ENCODE measurements at regions of chr18 and their contacts with region 1.

Region 1: GRCh38 chr18:43013486-43013885 is 102.0 kb downstream of the RIT2 start:
- DNase-seq: no peak
- ATAC-seq: no peak
- H3K4me3 ChIP-seq: no peak overlapping the region
- H3K4me3 Mint-ChIP-seq: no peak overlapping the region
- H3K27ac ChIP-seq: no peak overlapping the region
- H3K27ac Mint-ChIP-seq: no peak overlapping the region
- H3K4me1 ChIP-seq: no peaks in the 10 kb centered on the region
- H3K4me1 Mint-ChIP-seq: no peaks in the 10 kb centered on the region
- H3K27me3 ChIP-seq: no peaks in the 10 kb centered on the region
- H3K27me3 Mint-ChIP-seq: no peaks in the 10 kb centered on the region

Region 2: DNA sequence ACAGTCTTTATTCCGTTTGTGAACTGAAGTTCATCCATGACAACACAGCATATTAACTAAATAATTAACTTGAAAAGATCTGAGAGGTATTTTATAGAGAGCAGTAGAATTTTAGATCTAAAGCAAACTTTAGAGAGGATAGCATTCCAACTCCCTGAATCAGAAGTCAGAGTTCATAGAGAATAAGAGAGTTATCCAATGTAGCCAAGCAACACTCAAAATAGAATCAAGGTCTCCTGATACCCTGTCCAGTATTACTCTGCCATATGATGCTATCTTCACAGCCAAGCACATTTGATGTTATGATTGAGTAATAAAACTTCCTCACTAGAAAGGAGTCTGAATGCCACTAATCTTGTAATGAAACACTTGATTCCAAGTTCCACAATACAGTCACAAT is 46.5 kb after region 1 on chr18:
- CTCF ChIA-PET with region 1: no interaction called
- POLR2A ChIA-PET with region 1: interaction called in 1 of 2 experiments, 10 read pairs
- DNase-seq: no peak
- ATAC-seq: no peak
- H3K4me3 ChIP-seq: no peak overlapping the region
- H3K4me3 Mint-ChIP-seq: no peak overlapping the region
- H3K27ac ChIP-seq: no peak overlapping the region
- H3K27ac Mint-ChIP-seq: no peak overlapping the region
- H3K4me1 ChIP-seq: no peaks in the 10 kb centered on the region
- H3K4me1 Mint-ChIP-seq: no peaks in the 10 kb centered on the region
- H3K27me3 ChIP-seq: no peaks in the 10 kb centered on the region
- H3K27me3 Mint-ChIP-seq: no peaks in the 10 kb centered on the region

Region 3: DNA sequence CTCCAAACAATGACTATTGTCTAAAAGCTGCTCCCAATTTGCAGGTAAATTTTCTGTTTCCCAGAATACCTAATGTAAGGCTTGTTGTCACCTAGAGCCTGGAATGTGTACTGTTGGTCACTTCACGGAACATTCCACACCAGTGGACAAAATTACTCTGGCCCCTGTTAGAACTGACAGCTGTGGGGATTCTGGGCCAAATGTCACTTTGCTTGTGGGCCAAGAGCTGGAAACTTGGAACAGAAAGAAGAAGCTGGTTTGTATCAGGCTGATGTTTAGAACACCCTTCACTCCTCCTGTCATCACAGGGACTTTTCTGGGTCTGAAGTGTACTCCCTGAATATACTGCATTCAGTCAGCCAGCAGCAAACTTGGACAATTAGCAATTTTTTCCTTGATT is 759.4 kb after region 1 on chr18:
- CTCF ChIA-PET with region 1: no interaction called
- POLR2A ChIA-PET with region 1: no interaction called
- DNase-seq: no peak
- ATAC-seq: no peak
- H3K4me3 ChIP-seq: no peak overlapping the region
- H3K4me3 Mint-ChIP-seq: no peak overlapping the region
- H3K27ac ChIP-seq: no peak overlapping the region
- H3K27ac Mint-ChIP-seq: no peak overlapping the region
- H3K4me1 ChIP-seq: no peaks in the 10 kb centered on the region
- H3K4me1 Mint-ChIP-seq: no peaks in the 10 kb centered on the region
- H3K27me3 ChIP-seq: no peaks in the 10 kb centered on the region
- H3K27me3 Mint-ChIP-seq: no peaks in the 10 kb centered on the region

Measured in T-cell (primary cell).